Heart right ventricle (tissue), 16 donors: ENCODE measurements at regions of chr5 and their contacts with region 1.

Region 1: GRCh38 chr5:72280581-72281170 is 39.4 kb downstream of the MRPS27 start:
- DNase-seq: no peak
- ATAC-seq: peak in 2 of 8 donors; percentile 56
- H3K4me3 ChIP-seq: no peak overlapping the region
- H3K27ac ChIP-seq: peak overlapping the region in 8 of 10 donors; percentile 35 to 73 (median 64)
- H3K4me1 ChIP-seq: peaks cover 11 to 46% (median 34%) of the 10 kb centered on the region in 9 donors
- H3K27me3 ChIP-seq: no peaks in the 10 kb centered on the region
- CTCF ChIP-seq: peak in 7 of 9 donors; percentile 40 to 61 (median 48)

Region 2: DNA sequence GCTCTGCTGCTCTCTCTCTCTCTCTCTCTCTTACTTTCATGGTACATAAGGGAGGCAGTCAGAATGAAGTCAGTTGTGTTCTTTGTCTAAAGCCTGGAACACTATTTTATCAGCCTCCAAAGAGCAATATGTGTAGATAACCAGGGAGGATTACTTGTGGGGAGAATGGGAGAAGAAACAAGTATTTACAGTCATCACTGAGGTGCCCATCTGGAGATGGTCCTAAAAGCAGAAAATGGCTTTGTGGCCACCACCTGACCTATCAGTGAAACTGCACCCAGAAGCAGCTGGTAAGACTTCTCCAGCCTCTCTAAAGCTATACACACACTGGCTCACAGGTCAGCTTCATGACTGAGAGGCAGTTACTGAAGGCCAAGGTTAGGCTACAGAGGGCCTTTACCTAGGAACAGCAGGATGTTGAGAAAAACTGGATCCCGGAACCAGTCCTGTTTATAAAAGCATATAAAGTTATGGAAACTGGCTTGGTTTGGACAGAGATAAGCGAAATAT is 35.8 kb before region 1 on chr5:
- intact Hi-C with region 1: loop called in 1 of 10 experiments (anchors 5 kb)
- DNase-seq: peak in 1 of 2 donors; percentile 12
- ATAC-seq: peak in 7 of 8 donors; percentile 66 to 88 (median 77)
- H3K4me3 ChIP-seq: no peak overlapping the region
- H3K27ac ChIP-seq: peak overlapping the region in 8 of 10 donors; percentile 4 to 69 (median 52)
- H3K4me1 ChIP-seq: peaks cover 10 to 55% (median 50%) of the 10 kb centered on the region in 9 donors
- H3K27me3 ChIP-seq: no peaks in the 10 kb centered on the region
- CTCF ChIP-seq: peak in 8 of 9 donors; percentile 17 to 56 (median 41)

Region 3: GRCh38 chr5:72301557-72301956 is 20.9 kb after region 1 on chr5:
- intact Hi-C with region 1: loop called in 1 of 10 experiments (anchors 1 kb)
- DNase-seq: no peak
- ATAC-seq: peak in 1 of 8 donors; percentile 70
- H3K4me3 ChIP-seq: no peak overlapping the region
- H3K27ac ChIP-seq: no peak overlapping the region
- H3K4me1 ChIP-seq: peaks cover 0 to 24% (median 10%) of the 10 kb centered on the region in 9 donors
- H3K27me3 ChIP-seq: no peaks in the 10 kb centered on the region
- CTCF ChIP-seq: no peak

Region 4: DNA sequence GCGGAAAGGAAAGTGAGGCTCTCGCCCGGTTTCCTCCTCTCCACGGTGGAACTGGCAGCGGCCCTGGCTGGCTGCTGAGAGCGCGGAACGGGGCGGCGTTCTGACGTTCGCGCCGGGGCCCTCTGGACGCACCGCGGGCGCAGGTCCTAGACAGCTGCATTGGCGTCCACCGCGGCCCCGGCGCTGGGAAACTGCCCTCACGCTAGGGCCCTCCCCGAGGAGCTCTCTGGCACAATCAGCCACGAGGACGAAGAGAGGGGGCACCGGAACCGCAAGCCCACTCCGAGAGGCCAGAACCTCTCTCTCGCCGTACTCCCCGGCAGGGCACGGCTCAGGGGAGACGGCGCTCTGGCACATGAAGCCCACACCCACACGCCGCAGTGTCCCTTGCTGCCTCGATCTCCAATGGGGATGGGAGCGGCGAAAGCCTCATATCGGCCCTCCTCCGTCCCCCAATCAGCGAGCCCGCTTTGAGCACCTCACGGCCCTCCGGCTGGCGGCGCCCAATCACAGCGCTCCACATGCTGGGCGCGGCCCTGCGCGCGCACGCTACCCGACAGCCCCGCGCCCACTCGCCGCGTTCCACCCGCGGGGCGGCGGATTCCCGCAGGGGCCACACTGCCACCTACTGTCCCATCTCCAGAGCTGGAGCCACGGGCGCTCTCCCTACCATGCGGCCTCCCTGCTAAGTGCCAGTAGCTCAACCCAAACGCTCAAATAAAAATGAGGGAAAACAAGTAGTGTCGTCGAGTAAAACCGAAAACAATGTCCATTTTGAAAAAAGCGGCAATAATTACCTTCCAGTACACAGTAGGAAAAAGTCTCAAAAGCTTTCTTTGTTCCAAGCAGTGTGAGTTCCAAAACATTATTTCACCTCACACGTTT is 27.5 kb after region 1 on chr5:
- intact Hi-C with region 1: loop called in 1 of 10 experiments (anchors 2 kb)
- DNase-seq: peak; percentile 97 to 98
- ATAC-seq: peak; percentile 98 to 100 (median 99)
- H3K4me3 ChIP-seq: peak overlapping the region; percentile 44 to 82 (median 70)
- H3K27ac ChIP-seq: peak overlapping the region; percentile 68 to 97 (median 94)
- H3K4me1 ChIP-seq: peaks cover 0 to 28% (median 12%) of the 10 kb centered on the region in 9 donors
- H3K27me3 ChIP-seq: no peaks in the 10 kb centered on the region
- CTCF ChIP-seq: peak; percentile 84 to 98 (median 93)

Region 5: GRCh38 chr5:72417333-72418207 is 136.9 kb after region 1 on chr5:
- intact Hi-C with region 1: no loop called
- DNase-seq: no peak
- ATAC-seq: peak in 1 of 8 donors; percentile 30
- H3K4me3 ChIP-seq: no peak overlapping the region
- H3K27ac ChIP-seq: no peak overlapping the region
- H3K4me1 ChIP-seq: no peaks in the 10 kb centered on the region
- H3K27me3 ChIP-seq: no peaks in the 10 kb centered on the region
- CTCF ChIP-seq: no peak